Activated CD4-positive, alpha-beta T cell treated with anti-CD3 and anti-CD28 coated beads, Interleukin-2, amount 10 ng/mL, durations not matched to agents 7 days and 5 days (primary cell): ENCODE measurements at regions of chr9 and their contacts with region 1.

Region 1: DNA sequence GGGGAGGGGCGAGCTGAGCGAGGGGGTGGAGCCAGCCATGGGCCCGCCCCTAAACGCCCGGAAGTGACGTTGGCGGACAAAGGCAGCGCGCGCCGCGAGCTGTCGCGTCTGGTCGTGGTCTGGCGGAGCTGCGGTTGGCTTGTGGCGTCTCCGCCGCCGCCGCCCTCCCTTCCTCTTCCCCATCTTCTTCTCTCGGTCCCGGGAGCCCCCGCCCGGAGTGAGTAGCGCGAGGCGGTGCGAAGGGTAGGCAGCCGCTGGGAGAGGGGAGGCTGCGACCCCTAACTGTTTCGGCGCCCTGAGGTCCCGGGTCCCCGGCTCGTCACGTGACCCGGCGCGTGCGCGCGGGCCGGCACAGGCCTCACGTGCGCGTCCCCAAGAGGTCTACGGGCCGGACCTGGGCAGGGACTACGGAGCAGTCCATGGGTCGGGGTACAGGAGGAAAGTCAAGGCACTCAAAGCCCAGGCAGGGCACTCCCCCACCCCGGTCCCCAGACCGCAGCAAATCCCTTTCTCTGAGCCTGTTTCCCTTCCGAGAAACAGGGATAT is at the start of gene NTMT1:
- DNase-seq: peak; percentile 88
- H3K4me3 Mint-ChIP-seq: peak within 1 kb of the TSS; percentile 88
- H3K27ac Mint-ChIP-seq: peak within 1 kb of the TSS; percentile 99
- H3K4me1 Mint-ChIP-seq: peaks cover 54% of the 10 kb centered on the region
- H3K27me3 Mint-ChIP-seq: peaks cover 5% of the 10 kb centered on the region
- total RNA-seq, gene NTMT1: 28.5 to 33.9 TPM

Region 2: DNA sequence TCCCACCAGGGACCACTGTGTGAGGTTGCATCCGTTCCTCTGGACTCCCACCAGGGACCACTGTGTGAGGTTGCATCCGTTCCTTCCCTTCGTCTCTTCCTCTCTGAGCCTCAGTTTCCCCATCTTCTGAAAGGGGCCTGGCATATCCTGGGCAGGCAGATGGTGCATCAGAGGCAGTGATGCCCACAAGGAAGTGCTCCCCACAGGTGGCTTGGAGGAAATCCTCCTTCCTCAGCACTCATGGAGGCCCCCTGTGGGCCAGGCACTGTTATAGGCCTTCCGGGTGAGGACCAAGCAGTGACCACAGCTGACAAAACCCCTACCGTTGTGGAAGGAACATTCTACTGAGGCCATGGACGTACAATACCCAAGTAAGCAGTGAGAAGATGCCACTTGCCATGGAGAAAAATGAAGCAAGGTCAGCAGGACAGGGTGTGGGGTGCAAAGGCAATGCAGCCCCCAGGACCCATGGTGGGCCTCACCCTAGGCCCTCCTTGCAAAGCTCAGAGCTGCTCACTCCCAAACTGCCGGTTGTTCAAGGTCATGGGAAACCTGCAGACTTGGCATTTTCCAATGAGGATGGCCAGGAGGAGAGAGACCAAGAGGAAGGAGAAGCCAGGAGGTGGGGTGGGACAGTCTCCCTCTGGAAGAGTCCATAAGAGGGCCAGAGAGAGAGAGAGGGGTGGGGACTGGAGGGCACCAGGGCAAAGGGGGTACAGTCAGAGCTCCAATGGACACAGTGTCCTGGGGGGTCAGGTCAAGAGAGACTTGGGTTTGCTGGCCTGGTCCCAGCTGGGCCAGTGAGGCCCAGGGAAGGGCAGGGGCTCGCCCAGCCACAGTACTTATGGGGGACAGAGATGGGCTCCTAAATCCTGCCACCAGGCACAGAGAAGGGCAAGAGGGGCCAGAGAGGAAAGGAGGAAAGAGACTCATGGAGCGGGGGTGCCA is 56.4 kb before region 1 on chr9:
- CTCF ChIA-PET with region 1: no interaction called
- POLR2A ChIA-PET with region 1: no interaction called
- DNase-seq: no peak
- H3K4me3 Mint-ChIP-seq: peak overlapping the region; percentile 54
- H3K27ac Mint-ChIP-seq: no peak overlapping the region
- H3K4me1 Mint-ChIP-seq: peaks cover 24% of the 10 kb centered on the region
- H3K27me3 Mint-ChIP-seq: peaks cover 26% of the 10 kb centered on the region

Region 3: GRCh38 chr9:129610473-129611301 is 15.5 kb before region 1 on chr9:
- CTCF ChIA-PET with region 1: interaction called, 10 read pairs
- POLR2A ChIA-PET with region 1: no interaction called
- DNase-seq: peak; percentile 72
- H3K4me3 Mint-ChIP-seq: peak overlapping the region; percentile 71
- H3K27ac Mint-ChIP-seq: peak overlapping the region; percentile 75
- H3K4me1 Mint-ChIP-seq: peaks cover 42% of the 10 kb centered on the region
- H3K27me3 Mint-ChIP-seq: peaks cover under 1% of the 10 kb centered on the region

Region 4: GRCh38 chr9:129637102-129637501 is 10.9 kb after region 1 on chr9:
- CTCF ChIA-PET with region 1: interaction called, 13 read pairs
- POLR2A ChIA-PET with region 1: no interaction called
- DNase-seq: no peak
- H3K4me3 Mint-ChIP-seq: no peak overlapping the region
- H3K27ac Mint-ChIP-seq: no peak overlapping the region
- H3K4me1 Mint-ChIP-seq: peaks cover 20% of the 10 kb centered on the region
- H3K27me3 Mint-ChIP-seq: no peaks in the 10 kb centered on the region